Common myeloid progenitor, CD34-positive (primary cell): ENCODE measurements at regions of chr19 and their contacts with region 1.

Region 1: GRCh38 chr19:51168564-51169282 is 26.6 kb downstream of the SIGLEC7 start:
- DNase-seq: no peak
- H3K4me3 ChIP-seq: no peak overlapping the region
- H3K27ac ChIP-seq: no peak overlapping the region
- H3K4me1 ChIP-seq: peaks cover 5 to 41% (median 25%) of the 10 kb centered on the region in 4 experiments
- H3K27me3 ChIP-seq: no peaks in the 10 kb centered on the region

Region 2: DNA sequence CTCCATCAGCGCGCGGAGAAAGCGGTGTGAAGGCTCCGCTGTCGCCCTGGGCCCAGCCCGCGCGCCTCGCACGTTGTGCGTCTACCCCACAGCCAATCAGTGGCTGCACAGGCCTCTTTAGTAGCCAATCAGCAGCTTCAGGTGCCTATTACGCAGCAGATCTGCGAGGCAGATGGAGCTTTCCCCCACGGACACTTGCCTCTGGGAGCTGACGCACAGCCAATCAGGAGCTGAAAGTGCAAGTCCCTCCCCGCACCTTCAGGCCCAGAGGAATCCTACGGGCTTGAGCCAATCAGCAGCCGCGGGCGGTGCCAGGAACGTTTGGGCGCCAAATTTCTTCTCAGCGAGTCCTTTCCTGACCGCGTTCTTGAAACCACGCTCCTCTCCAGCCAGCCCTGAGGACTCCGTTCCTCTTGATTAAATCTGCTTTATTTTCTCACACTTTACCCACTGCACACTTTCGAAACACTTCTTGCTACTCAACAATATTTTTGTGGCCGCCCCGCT is 13.2 kb after region 1 on chr19:
- CTCF ChIA-PET with region 1: interaction called, 11 read pairs
- POLR2A ChIA-PET with region 1: no interaction called
- DNase-seq: peak; percentile 14 to 46 (median 37)
- H3K4me3 ChIP-seq: peak overlapping the region in 3 of 7 experiments; percentile 10 to 33 (median 26)
- H3K27ac ChIP-seq: no peak overlapping the region
- H3K4me1 ChIP-seq: peaks cover 0 to 62% (median 50%) of the 10 kb centered on the region in 4 experiments
- H3K27me3 ChIP-seq: no peaks in the 10 kb centered on the region